ENCODE measurements at regions of chr14 and their contacts with region 1.

Region 1: GRCh38 chr14:20613094-20614037 is 22.2 kb upstream of the RNASE12 start:
- H3K4me3 ChIP-seq: peak overlapping the region; percentile 81
- H3K27ac ChIP-seq: peak overlapping the region; percentile 74
- H3K4me1 ChIP-seq: peaks cover 13% of the 10 kb centered on the region
- CTCF ChIP-seq: peak; percentile 88

Region 2: GRCh38 chr14:20327005-20327869 is 286.1 kb before region 1 on chr14:
- CTCF ChIA-PET with region 1: interaction called, 22 read pairs
- POLR2A ChIA-PET with region 1: no interaction called
- H3K4me3 ChIP-seq: no peak overlapping the region
- H3K27ac ChIP-seq: no peak overlapping the region
- H3K4me1 ChIP-seq: peaks cover 6% of the 10 kb centered on the region; the same call in 1 of the 2 replicates
- CTCF ChIP-seq: 0 out of 2 replicates have a peak, but pooled peaks have one; percentile 24

Region 3: DNA sequence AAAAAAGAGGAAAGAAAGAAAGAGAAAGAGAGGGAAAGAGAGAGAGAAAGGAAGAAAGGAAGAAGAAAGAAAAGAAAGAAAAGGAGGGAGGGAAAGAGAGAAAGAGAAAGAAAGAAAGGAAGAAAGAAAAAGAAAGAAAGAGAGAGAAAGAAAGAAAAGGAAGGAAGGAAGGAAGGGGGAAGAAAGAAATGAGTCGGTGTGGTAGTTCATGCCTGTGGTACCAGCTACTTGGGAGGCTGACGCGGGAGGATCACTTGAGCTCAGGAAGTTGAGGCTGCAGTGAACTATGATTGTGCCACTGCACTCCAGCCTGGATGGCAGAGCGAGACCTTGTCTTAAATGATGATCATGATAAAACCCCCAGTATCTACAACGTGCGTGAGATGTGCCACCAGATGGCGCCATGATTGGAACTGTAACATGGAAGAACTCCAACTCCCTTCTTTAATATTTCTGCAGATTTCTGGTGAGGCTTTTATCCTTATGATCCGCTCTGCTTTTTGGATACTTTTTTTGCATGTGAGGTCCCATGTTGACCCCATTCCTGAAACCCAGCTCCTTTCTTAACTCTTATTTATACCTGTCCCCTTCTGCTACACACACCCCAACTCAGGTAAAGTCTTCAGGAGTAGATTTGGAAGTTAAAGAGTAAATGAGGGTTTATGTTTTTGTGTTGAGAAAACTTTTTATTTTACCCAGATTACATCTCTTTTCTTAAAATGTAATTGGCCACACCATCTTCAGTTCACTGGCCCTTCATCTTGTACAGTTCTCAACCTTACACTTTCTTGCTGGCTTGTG is 82.4 kb before region 1 on chr14:
- CTCF ChIA-PET with region 1: interaction called, 14 read pairs
- POLR2A ChIA-PET with region 1: no interaction called
- H3K4me3 ChIP-seq: no peak overlapping the region
- H3K27ac ChIP-seq: no peak overlapping the region
- H3K4me1 ChIP-seq: no peaks in the 10 kb centered on the region
- CTCF ChIP-seq: peak; percentile 55

Region 4: DNA sequence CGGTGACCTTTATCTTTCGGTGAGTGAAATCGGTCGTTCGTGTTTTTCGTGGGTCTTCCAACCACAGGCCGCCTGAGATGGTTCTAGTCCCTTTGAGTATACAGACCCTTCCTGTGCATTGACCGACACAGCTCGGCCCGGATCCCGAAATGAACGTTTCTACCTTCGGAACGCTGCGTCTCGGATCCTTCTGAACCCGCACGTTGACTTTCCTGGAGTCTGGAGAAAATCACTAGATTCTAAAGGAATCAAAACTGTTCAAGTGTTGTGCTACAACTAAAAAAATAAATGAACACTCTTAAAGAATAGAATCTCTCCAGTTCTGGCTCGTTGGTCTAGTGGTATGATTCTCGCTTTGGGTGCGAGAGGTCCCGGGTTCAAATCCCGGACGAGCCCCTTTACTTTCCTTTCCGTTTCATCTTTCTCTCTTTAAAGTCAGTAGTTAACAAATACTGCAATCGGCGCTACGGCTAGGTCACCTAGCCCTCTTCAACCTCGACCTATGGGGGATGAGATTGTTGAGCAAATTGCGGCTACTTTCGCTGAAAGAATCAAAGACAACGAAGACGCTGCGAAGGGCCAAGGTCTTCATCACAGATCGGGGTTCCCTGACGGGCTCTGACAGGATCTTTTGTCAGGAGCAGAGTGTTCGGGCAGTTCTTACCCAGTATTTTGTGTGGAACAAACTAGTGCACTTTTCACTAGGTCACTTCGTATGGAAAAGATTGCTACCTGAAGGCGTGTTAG is 19.5 kb after region 1 on chr14:
- CTCF ChIA-PET with region 1: interaction called, 22 read pairs
- POLR2A ChIA-PET with region 1: interaction called, 10 read pairs
- H3K4me3 ChIP-seq: peak overlapping the region; percentile 65
- H3K27ac ChIP-seq: no peak overlapping the region; the same call in 1 of the 2 replicates
- H3K4me1 ChIP-seq: no peaks in the 10 kb centered on the region
- CTCF ChIP-seq: no peak

Region 5: DNA sequence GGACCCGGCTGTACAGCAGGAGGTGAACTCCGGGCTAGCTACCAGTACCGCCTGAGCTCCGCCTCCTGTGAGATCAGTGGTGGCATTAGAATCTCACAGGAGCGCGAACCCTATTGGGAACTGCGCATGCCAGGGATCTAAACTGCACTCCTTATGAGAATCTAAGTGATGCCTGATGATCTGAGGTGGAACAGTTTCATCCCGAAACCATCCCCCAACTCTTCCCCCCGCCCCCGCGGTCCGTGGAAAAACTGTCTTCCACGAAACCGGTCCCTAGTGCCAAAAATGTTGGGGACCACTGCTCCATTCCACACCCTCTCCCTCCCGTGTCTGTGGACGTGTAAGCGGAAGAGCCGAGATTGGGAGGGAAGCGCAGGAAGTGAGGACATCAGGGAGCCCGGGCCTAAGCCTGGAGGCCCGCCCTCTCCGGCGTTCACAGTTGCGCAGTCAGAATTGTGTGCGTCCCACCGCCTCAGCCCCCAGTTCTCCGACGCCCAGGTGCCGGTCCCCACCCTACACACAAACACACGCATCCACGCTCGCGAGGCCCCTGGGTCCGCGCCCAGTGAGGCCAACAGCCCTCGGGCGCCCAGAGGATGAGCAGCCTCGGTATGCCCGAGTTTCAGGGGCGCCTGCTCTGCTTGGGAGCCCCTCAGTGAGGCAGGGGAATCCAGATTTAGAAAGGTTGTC is 69.2 kb after region 1 on chr14:
- CTCF ChIA-PET with region 1: interaction called, 9 read pairs
- POLR2A ChIA-PET with region 1: interaction called, 16 read pairs
- H3K4me3 ChIP-seq: peak overlapping the region; percentile 68
- H3K27ac ChIP-seq: peak overlapping the region; percentile 96
- H3K4me1 ChIP-seq: no peaks in the 10 kb centered on the region; the same call in 1 of the 2 replicates
- CTCF ChIP-seq: no peak

Region 6: GRCh38 chr14:20690848-20691523 is 77.6 kb after region 1 on chr14:
- CTCF ChIA-PET with region 1: interaction called, 28 read pairs
- POLR2A ChIA-PET with region 1: no interaction called
- H3K4me3 ChIP-seq: no peak overlapping the region
- H3K27ac ChIP-seq: no peak overlapping the region
- H3K4me1 ChIP-seq: no peaks in the 10 kb centered on the region
- CTCF ChIP-seq: peak; percentile 53

Measured in HEK293 (cell line).